Left cardiac atrium (tissue), 4 donors: ENCODE measurements at regions of chr5 and their contacts with region 1.

Region 1: GRCh38 chr5:37174928-37175327 is 74.2 kb downstream of the CPLANE1 start:
- DNase-seq: no peak
- ATAC-seq: no peak

Region 2: DNA sequence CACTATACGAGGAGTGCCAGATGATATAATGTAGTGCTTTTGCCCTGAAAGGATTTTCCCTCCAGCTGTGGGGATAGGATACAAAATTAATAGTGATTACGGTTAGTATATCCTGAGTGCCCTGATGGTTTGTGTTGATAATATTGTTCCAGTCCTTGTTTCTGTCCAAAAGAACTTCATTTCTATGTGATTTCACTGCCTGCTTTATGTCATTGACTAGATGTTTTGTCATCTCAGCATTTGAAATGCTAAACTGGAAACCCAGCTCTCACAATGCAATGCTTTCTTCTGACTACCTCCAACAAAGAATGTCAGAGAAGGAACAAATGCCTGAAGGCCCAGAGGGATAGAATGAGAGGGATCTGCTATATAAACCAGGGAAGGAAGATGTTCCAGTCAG is 120.5 kb before region 1 on chr5:
- intact Hi-C with region 1: loop called in 1 of 2 experiments (anchors 10 kb)
- DNase-seq: no peak
- ATAC-seq: no peak